Mammary epithelial cell (primary cell): ENCODE measurements at regions of chr20 and their contacts with region 1.

Region 1: GRCh38 chr20:32079655-32080109 is 27.6 kb downstream of the HCK start:
- DNase-seq: no peak
- H3K4me3 ChIP-seq: no peak overlapping the region
- H3K27ac ChIP-seq: no peak overlapping the region
- H3K4me1 ChIP-seq: no peaks in the 10 kb centered on the region
- H3K27me3 ChIP-seq: no peaks in the 10 kb centered on the region
- CTCF ChIP-seq: no peak

Region 2: GRCh38 chr20:31815408-31816188 is 264.1 kb before region 1 on chr20:
- CTCF ChIA-PET with region 1: no interaction called
- dilution Hi-C with region 1: loop called (anchors 5 kb)
- in situ Hi-C with region 1: no loop called
- intact Hi-C with region 1: no loop called
- DNase-seq: no peak
- H3K4me3 ChIP-seq: no peak overlapping the region
- H3K27ac ChIP-seq: no peak overlapping the region
- H3K4me1 ChIP-seq: no peaks in the 10 kb centered on the region
- H3K27me3 ChIP-seq: no peaks in the 10 kb centered on the region
- CTCF ChIP-seq: no peak

Region 3: DNA sequence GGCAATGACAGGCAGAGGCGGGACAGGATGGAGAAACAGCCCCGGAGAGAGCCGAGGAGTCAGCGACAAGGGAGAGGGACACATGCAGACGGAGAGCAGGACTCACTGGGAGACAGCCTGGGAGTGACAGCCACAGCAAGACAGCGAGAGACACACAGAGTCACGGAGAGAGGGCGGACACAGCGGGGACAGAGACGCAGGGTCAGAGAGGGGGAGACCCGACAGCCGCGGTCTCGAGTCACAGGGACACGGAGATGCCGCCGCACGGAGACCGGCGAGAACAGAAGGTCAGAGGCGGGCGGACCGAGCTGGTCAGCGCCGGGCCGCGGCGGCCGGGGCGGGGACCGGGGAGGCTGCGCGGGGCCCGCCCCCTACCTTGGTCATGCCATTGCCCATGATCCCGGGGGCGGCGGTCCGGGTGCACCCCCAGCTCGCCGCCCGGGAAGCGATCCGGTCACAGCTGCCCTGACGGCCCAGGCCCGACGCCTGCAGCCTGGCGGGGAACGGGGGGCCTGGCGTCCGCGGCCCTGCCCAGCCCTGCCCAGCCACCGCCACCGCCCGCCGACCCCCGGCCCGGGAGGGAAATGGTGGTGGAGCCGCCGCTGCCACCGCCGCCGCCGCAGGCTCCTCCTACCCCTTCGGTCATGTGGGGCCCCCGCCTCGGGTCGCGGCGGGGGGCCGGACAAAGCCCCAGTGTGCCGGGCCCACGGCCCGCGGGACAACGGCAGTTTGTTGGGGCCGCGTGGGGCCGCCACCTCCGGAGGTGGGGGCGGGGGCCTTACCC is 209.5 kb before region 1 on chr20 and contains the starts of genes DUSP15 and TTLL9:
- CTCF ChIA-PET with region 1: no interaction called
- dilution Hi-C with region 1: loop called (anchors 5 kb)
- in situ Hi-C with region 1: no loop called
- intact Hi-C with region 1: no loop called
- DNase-seq: no peak
- H3K4me3 ChIP-seq: peak within 1 kb of the TSS; percentile 40 to 47 (median 43)
- H3K27ac ChIP-seq: no peak within 1 kb of the TSS
- H3K4me1 ChIP-seq: peaks cover 9% of the 10 kb centered on the region
- H3K27me3 ChIP-seq: peaks cover 32% of the 10 kb centered on the region
- CTCF ChIP-seq: no peak
- total RNA-seq, gene DUSP15: 0.67 TPM in 1 of 2 donors, not detected in the other
- total RNA-seq, gene TTLL9: 0.17 to 0.21 TPM

Region 4: DNA sequence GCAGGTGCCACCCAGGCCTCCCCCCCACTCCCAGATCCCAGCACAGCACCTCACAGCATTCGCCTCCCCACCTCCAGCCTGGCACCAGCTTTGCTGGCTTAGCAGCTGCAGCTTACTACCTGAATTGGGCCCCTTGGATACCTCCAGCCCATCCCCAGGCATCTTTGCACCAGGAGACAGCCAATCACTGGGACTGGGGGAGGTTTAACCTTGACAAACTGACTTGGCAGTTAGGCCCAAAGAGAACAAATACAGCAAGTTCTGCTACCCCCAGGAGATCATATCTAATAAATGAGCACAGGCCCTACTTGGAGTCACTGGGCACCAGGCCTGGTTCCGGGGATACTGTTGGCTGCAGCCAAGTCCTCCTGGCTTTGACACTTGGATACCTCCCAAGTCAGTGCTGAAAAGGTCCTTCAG is 136.6 kb before region 1 on chr20:
- CTCF ChIA-PET with region 1: no interaction called
- dilution Hi-C with region 1: loop called (anchors 5 kb)
- in situ Hi-C with region 1: no loop called
- intact Hi-C with region 1: no loop called
- DNase-seq: no peak
- H3K4me3 ChIP-seq: no peak overlapping the region
- H3K27ac ChIP-seq: no peak overlapping the region
- H3K4me1 ChIP-seq: peaks cover 5% of the 10 kb centered on the region
- H3K27me3 ChIP-seq: no peaks in the 10 kb centered on the region
- CTCF ChIP-seq: no peak

Region 5: GRCh38 chr20:31990641-31991338 is 88.9 kb before region 1 on chr20:
- CTCF ChIA-PET with region 1: no interaction called
- dilution Hi-C with region 1: loop called (anchors 5 kb)
- in situ Hi-C with region 1: no loop called
- intact Hi-C with region 1: no loop called
- DNase-seq: no peak
- H3K4me3 ChIP-seq: no peak overlapping the region
- H3K27ac ChIP-seq: no peak overlapping the region
- H3K4me1 ChIP-seq: peaks cover 7% of the 10 kb centered on the region
- H3K27me3 ChIP-seq: peaks cover 9% of the 10 kb centered on the region
- CTCF ChIP-seq: no peak

Region 6: GRCh38 chr20:32031007-32031958 is 48.4 kb before region 1 on chr20:
- CTCF ChIA-PET with region 1: no interaction called
- dilution Hi-C with region 1: loop called (anchors 10 kb)
- in situ Hi-C with region 1: no loop called
- intact Hi-C with region 1: no loop called
- DNase-seq: peak; percentile 66
- H3K4me3 ChIP-seq: peak overlapping the region in 1 of 3 experiments; percentile 23
- H3K27ac ChIP-seq: no peak overlapping the region
- H3K4me1 ChIP-seq: peaks cover 5% of the 10 kb centered on the region
- H3K27me3 ChIP-seq: peaks cover 3% of the 10 kb centered on the region
- CTCF ChIP-seq: peak; percentile 72 to 88

Region 7: GRCh38 chr20:32045999-32046398 is 33.7 kb before region 1 on chr20:
- CTCF ChIA-PET with region 1: no interaction called
- dilution Hi-C with region 1: loop called (anchors 5 kb)
- in situ Hi-C with region 1: no loop called
- intact Hi-C with region 1: no loop called
- DNase-seq: no peak
- H3K4me3 ChIP-seq: no peak overlapping the region
- H3K27ac ChIP-seq: no peak overlapping the region
- H3K4me1 ChIP-seq: no peaks in the 10 kb centered on the region
- H3K27me3 ChIP-seq: peaks cover 1% of the 10 kb centered on the region
- CTCF ChIP-seq: no peak